Prostate gland (tissue), 2 donors: ENCODE measurements at regions of chr4 and their contacts with region 1.

Region 1: GRCh38 chr4:16524911-16525554 is 298.8 kb upstream of the TAPT1 start:
- DNase-seq: no peak
- H3K4me3 ChIP-seq: no peak overlapping the region
- H3K27ac ChIP-seq: no peak overlapping the region
- H3K4me1 ChIP-seq: no peaks in the 10 kb centered on the region
- H3K27me3 ChIP-seq: no peaks in the 10 kb centered on the region
- CTCF ChIP-seq: no peak
- POLR2A ChIP-seq: no peak

Region 2: GRCh38 chr4:16752150-16752549 is 227.1 kb after region 1 on chr4:
- intact Hi-C with region 1: loop called (anchors 10 kb)
- DNase-seq: no peak
- H3K4me3 ChIP-seq: no peak overlapping the region
- H3K27ac ChIP-seq: no peak overlapping the region
- H3K4me1 ChIP-seq: no peaks in the 10 kb centered on the region
- H3K27me3 ChIP-seq: no peaks in the 10 kb centered on the region
- CTCF ChIP-seq: no peak
- POLR2A ChIP-seq: no peak